ENCODE measurements at regions of chr15 and their contacts with region 1.

Region 1: GRCh38 chr15:77059786-77060361 is 11.0 kb downstream of the TSPAN3 start:
- DNase-seq: no peak
- H3K4me3 Mint-ChIP-seq: no peak overlapping the region
- H3K27ac Mint-ChIP-seq: no peak overlapping the region
- H3K4me1 Mint-ChIP-seq: peaks cover 17% of the 10 kb centered on the region
- H3K27me3 Mint-ChIP-seq: no peaks in the 10 kb centered on the region

Region 2: GRCh38 chr15:77046704-77047412 is 13.0 kb before region 1 on chr15:
- CTCF ChIA-PET with region 1: no interaction called
- POLR2A ChIA-PET with region 1: interaction called, 10 read pairs
- DNase-seq: no peak
- H3K4me3 Mint-ChIP-seq: no peak overlapping the region
- H3K27ac Mint-ChIP-seq: no peak overlapping the region
- H3K4me1 Mint-ChIP-seq: no peaks in the 10 kb centered on the region
- H3K27me3 Mint-ChIP-seq: no peaks in the 10 kb centered on the region

Region 3: DNA sequence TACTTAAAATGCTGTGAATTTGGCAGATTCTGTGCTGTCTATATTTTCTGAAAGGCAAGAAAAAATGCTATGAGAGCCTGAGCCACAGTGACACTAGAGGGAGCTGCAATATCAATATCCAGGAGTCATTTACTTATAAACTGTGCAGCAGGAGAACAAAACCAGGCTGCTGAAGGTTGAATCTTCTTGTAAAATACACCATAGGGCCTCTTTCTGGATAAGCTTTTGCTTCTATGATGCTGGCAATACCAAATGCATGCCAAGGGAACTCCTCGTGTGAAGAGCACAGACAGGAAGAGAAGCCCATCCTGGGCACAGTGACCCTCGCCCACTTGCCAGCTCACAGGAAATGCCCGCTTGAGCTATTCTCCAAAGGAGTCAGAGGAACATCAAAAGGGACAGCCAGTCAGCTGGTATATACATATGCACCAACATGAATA is 59.0 kb after region 1 on chr15:
- CTCF ChIA-PET with region 1: no interaction called
- POLR2A ChIA-PET with region 1: no interaction called
- DNase-seq: peak; percentile 35
- H3K4me3 Mint-ChIP-seq: no peak overlapping the region
- H3K27ac Mint-ChIP-seq: no peak overlapping the region
- H3K4me1 Mint-ChIP-seq: peaks cover 4% of the 10 kb centered on the region
- H3K27me3 Mint-ChIP-seq: peaks cover 2% of the 10 kb centered on the region

Region 4: GRCh38 chr15:77209221-77209620 is 149.3 kb after region 1 on chr15:
- CTCF ChIA-PET with region 1: no interaction called
- POLR2A ChIA-PET with region 1: no interaction called
- DNase-seq: no peak
- H3K4me3 Mint-ChIP-seq: no peak overlapping the region
- H3K27ac Mint-ChIP-seq: no peak overlapping the region
- H3K4me1 Mint-ChIP-seq: no peaks in the 10 kb centered on the region
- H3K27me3 Mint-ChIP-seq: no peaks in the 10 kb centered on the region